Adrenal gland (tissue), 19 donors: ENCODE measurements at regions of chr11 and their contacts with region 1.

Region 1: GRCh38 chr11:34051349-34052035 is at the start of gene CAPRIN1:
- DNase-seq: peak; percentile 84 to 89 (median 86)
- H3K4me3 ChIP-seq: peak within 1 kb of the TSS; percentile 66 to 99 (median 97)
- H3K27ac ChIP-seq: peak within 1 kb of the TSS; percentile 94 to 99 (median 98)
- H3K4me1 ChIP-seq: peaks cover 20 to 36% of the 10 kb centered on the region in 2 donors
- H3K27me3 ChIP-seq: no peaks in the 10 kb centered on the region
- CTCF ChIP-seq: peak in 1 of 6 experiments; percentile 14
- POLR2A ChIP-seq: peak; percentile 76 to 85
- total RNA-seq, gene CAPRIN1: 101 to 174 (median 152) TPM

Region 2: DNA sequence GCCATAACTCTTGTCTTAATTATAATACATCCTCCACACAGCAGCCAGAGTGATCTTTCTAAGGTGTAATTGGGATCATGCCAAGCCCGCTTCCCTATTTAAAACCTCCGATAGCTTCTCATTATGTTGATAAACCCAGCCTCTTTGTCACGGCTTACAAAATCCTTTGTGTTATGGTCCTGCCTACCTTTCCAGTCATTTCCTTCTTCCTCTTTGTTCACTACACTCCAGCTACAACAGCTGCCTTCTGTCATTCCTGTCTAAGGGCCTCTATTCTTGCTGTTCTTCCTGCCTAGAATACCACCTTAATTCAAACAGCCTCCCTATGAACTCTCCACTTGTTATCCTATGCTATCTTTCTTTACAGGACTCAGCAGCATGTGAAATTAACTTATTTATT is 70.6 kb before region 1 on chr11:
- intact Hi-C with region 1: no loop called
- DNase-seq: no peak
- H3K4me3 ChIP-seq: no peak overlapping the region
- H3K27ac ChIP-seq: no peak overlapping the region
- H3K4me1 ChIP-seq: no peaks in the 10 kb centered on the region
- H3K27me3 ChIP-seq: no peaks in the 10 kb centered on the region
- CTCF ChIP-seq: no peak
- POLR2A ChIP-seq: no peak

Region 3: GRCh38 chr11:34105079-34105956 is 53.8 kb after region 1 on chr11 and contains the start of gene NAT10:
- intact Hi-C with region 1: loop called (anchors 5 to 10 kb)
- DNase-seq: peak; percentile 97 to 99 (median 98)
- H3K4me3 ChIP-seq: peak within 1 kb of the TSS; percentile 4 to 99 (median 87)
- H3K27ac ChIP-seq: peak within 1 kb of the TSS; percentile 37 to 98 (median 91)
- H3K4me1 ChIP-seq: peaks cover 10 to 20% of the 10 kb centered on the region in 2 donors
- H3K27me3 ChIP-seq: no peaks in the 10 kb centered on the region
- CTCF ChIP-seq: peak in 5 of 6 experiments; percentile 2 to 21 (median 12)
- POLR2A ChIP-seq: peak; percentile 53 to 87
- total RNA-seq, gene NAT10: 16.8 to 53.7 (median 39.0) TPM